ENCODE measurements at regions of chr19 and their contacts with region 1.

Region 1: GRCh38 chr19:15869109-15869555 is 28.7 kb downstream of the CYP4F2 start:
- DNase-seq: peak; percentile 14 to 75 (median 30)
- ATAC-seq: peak; percentile 88
- H3K4me3 ChIP-seq: no peak overlapping the region
- H3K4me3 Mint-ChIP-seq: no peak overlapping the region
- H3K27ac ChIP-seq: no peak overlapping the region
- H3K27ac Mint-ChIP-seq: no peak overlapping the region
- H3K4me1 ChIP-seq: peaks cover 15% of the 10 kb centered on the region
- H3K4me1 Mint-ChIP-seq: peaks cover 4% of the 10 kb centered on the region
- H3K27me3 ChIP-seq: peaks cover 0 to 2% of the 10 kb centered on the region in 2 experiments
- H3K27me3 Mint-ChIP-seq: peaks cover 11% of the 10 kb centered on the region
- CTCF ChIP-seq: peak; percentile 68

Region 2: GRCh38 chr19:15584541-15585115 is 284.5 kb before region 1 on chr19:
- CTCF ChIA-PET with region 1: no interaction called
- POLR2A ChIA-PET with region 1: no interaction called
- intact Hi-C with region 1: loop called in 1 of 2 experiments (anchors 2 kb)
- DNase-seq: peak; percentile 74 to 90 (median 80)
- ATAC-seq: peak; percentile 98
- H3K4me3 ChIP-seq: peak overlapping the region; percentile 29
- H3K4me3 Mint-ChIP-seq: no peak overlapping the region
- H3K27ac ChIP-seq: no peak overlapping the region
- H3K27ac Mint-ChIP-seq: no peak overlapping the region
- H3K4me1 ChIP-seq: peaks cover 8% of the 10 kb centered on the region
- H3K4me1 Mint-ChIP-seq: peaks cover 6% of the 10 kb centered on the region
- H3K27me3 ChIP-seq: peaks cover 12 to 14% of the 10 kb centered on the region in 2 experiments
- H3K27me3 Mint-ChIP-seq: peaks cover 36% of the 10 kb centered on the region
- CTCF ChIP-seq: peak; percentile 93

Region 3: DNA sequence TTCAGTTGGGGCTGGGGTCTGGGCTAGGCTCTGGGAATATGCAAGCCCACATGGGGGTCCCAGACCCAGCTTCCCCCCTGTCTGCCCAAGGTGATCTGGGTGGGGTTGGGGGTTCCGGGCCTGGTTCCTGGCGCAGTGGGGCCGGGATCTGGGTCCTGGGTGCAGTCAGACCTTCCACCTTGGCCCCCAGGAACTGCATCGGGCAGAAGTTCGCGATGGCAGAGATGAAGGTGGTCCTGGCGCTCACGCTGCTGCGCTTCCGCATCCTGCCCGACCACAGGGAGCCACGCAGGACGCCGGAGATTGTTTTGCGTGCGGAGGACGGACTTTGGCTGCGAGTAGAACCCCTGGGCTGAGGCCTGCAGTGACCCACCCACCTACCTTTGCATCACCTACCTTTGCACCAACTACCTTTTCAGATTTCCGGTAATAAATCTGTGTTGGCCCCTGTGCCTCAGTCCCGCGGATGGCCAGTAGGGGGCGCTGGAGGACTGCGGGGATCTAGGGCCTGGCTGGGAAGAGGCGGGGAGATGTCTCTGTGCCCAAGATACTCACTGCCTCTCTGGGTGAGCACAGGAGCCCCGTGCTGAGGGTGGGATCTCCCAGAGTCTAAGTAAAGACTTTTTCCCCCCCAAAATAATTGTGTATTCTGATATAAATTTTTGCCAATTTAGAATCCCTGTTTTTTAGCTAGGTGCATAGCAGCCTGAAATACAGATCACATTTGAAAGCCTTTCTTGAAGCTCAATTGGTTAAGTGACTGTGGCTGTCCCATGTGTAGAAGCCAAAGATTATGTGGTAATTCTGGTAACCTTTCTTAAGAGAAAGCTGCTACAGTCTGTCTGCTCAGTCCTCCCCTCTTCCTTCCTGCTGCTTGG is 239.9 kb before region 1 on chr19:
- CTCF ChIA-PET with region 1: no interaction called
- POLR2A ChIA-PET with region 1: no interaction called
- intact Hi-C with region 1: loop called (anchors 1 kb)
- DNase-seq: peak; percentile 77 to 95 (median 90)
- ATAC-seq: peak; percentile 98
- H3K4me3 ChIP-seq: no peak overlapping the region
- H3K4me3 Mint-ChIP-seq: no peak overlapping the region
- H3K27ac ChIP-seq: no peak overlapping the region
- H3K27ac Mint-ChIP-seq: no peak overlapping the region
- H3K4me1 ChIP-seq: peaks cover 10% of the 10 kb centered on the region
- H3K4me1 Mint-ChIP-seq: no peaks in the 10 kb centered on the region
- H3K27me3 ChIP-seq: peaks cover 0 to 7% of the 10 kb centered on the region in 2 experiments
- H3K27me3 Mint-ChIP-seq: peaks cover 22% of the 10 kb centered on the region
- CTCF ChIP-seq: peak; percentile 93

Region 4: GRCh38 chr19:15812060-15812682 is 57.0 kb before region 1 on chr19:
- CTCF ChIA-PET with region 1: interaction called, 5 read pairs
- POLR2A ChIA-PET with region 1: no interaction called
- intact Hi-C with region 1: loop called (anchors 1 kb)
- DNase-seq: peak; percentile 6 to 76 (median 40)
- ATAC-seq: peak; percentile 71
- H3K4me3 ChIP-seq: no peak overlapping the region
- H3K4me3 Mint-ChIP-seq: no peak overlapping the region
- H3K27ac ChIP-seq: no peak overlapping the region
- H3K27ac Mint-ChIP-seq: no peak overlapping the region
- H3K4me1 ChIP-seq: peaks cover 8% of the 10 kb centered on the region
- H3K4me1 Mint-ChIP-seq: peaks cover 10% of the 10 kb centered on the region
- H3K27me3 ChIP-seq: no peaks in the 10 kb centered on the region
- H3K27me3 Mint-ChIP-seq: peaks cover 17% of the 10 kb centered on the region
- CTCF ChIP-seq: peak; percentile 43

Region 5: GRCh38 chr19:15836595-15837337 is 32.4 kb before region 1 on chr19:
- CTCF ChIA-PET with region 1: no interaction called
- POLR2A ChIA-PET with region 1: interaction called, 7 read pairs
- intact Hi-C with region 1: loop called in 1 of 2 experiments (anchors 2 kb)
- DNase-seq: peak; percentile 86 to 98 (median 95)
- ATAC-seq: peak; percentile 86
- H3K4me3 ChIP-seq: peak overlapping the region; percentile 96
- H3K4me3 Mint-ChIP-seq: peak overlapping the region; percentile 96
- H3K27ac ChIP-seq: peak overlapping the region; percentile 97 to 99
- H3K27ac Mint-ChIP-seq: peak overlapping the region; percentile 92
- H3K4me1 ChIP-seq: peaks cover 20% of the 10 kb centered on the region
- H3K4me1 Mint-ChIP-seq: peaks cover 18% of the 10 kb centered on the region
- H3K27me3 ChIP-seq: no peaks in the 10 kb centered on the region
- H3K27me3 Mint-ChIP-seq: no peaks in the 10 kb centered on the region
- CTCF ChIP-seq: no peak

Measured in CD4-positive, alpha-beta T cell (primary cell).